ENCODE measurements at regions of chr3 and their contacts with region 1.

Region 1: DNA sequence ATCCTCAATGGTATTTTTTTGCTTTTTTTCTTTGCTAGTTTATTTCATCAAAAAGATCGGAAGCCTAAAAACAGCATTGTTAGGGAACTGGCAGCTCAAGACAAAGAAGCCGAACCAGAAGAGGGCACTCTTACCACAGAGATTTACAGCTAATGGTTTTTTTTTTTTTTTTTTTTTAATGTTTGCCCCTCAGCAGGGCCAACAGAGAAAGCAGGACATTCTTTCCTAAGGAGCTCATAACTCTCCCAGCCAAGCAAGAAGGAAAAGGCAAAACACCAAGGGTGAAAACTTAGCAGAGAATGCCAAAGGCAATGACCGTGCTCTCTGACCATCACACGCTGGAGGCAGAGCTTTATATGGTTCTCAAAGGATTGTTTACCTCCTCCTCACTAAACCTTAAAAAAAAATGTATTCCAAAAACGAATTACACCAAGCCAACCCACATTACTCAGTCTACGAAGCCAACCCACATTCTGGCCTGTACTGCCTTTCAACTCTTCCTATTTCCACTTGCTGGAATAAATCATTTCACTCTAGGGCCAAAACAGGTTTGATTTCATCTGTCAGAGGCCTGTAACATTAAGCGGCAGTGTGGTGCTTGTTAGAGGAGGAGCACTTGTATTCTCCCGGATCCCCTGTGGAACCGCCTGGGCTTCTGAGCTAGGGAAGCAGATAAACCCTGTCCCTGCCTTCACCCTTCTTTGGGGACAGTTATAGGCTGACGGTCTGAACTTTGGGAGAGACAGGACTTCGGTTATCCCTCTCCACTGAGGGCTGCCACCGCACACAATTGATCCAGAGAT is 35.6 kb upstream of the GYG1 start:
- DNase-seq: peak; percentile 95
- ATAC-seq: peak; percentile 76
- H3K4me3 ChIP-seq: no peak overlapping the region
- H3K27ac ChIP-seq: peak overlapping the region; percentile 74
- H3K4me1 ChIP-seq: peaks cover 13% of the 10 kb centered on the region
- H3K27me3 ChIP-seq: no peaks in the 10 kb centered on the region
- CTCF ChIP-seq: peak; percentile 86
- POLR2A ChIP-seq: no peak
- RAD21 ChIP-seq: peak; percentile 81

Region 2: GRCh38 chr3:148379763-148380382 is 575.9 kb before region 1 on chr3:
- CTCF ChIA-PET with region 1: interaction called, 5 read pairs
- POLR2A ChIA-PET with region 1: no interaction called
- dilution Hi-C with region 1: no loop called
- in situ Hi-C with region 1: no loop called
- intact Hi-C with region 1: loop called (anchors 2 kb)
- DNase-seq: peak; percentile 69
- ATAC-seq: peak; percentile 91
- H3K4me3 ChIP-seq: no peak overlapping the region
- H3K27ac ChIP-seq: no peak overlapping the region
- H3K4me1 ChIP-seq: no peaks in the 10 kb centered on the region
- H3K27me3 ChIP-seq: no peaks in the 10 kb centered on the region
- CTCF ChIP-seq: peak; percentile 63
- POLR2A ChIP-seq: no peak
- RAD21 ChIP-seq: peak; percentile 77

Region 3: GRCh38 chr3:149042789-149043386 is 87.1 kb after region 1 on chr3:
- CTCF ChIA-PET with region 1: no interaction called
- POLR2A ChIA-PET with region 1: no interaction called
- dilution Hi-C with region 1: no loop called
- in situ Hi-C with region 1: no loop called
- intact Hi-C with region 1: loop called (anchors 5 kb)
- DNase-seq: peak; percentile 72
- ATAC-seq: peak; percentile 46; the same call in 1 of the 2 replicates
- H3K4me3 ChIP-seq: no peak overlapping the region
- H3K27ac ChIP-seq: no peak overlapping the region
- H3K4me1 ChIP-seq: no peaks in the 10 kb centered on the region; the same call in 1 of the 2 replicates
- H3K27me3 ChIP-seq: no peaks in the 10 kb centered on the region
- CTCF ChIP-seq: no peak
- POLR2A ChIP-seq: no peak
- RAD21 ChIP-seq: no peak

Region 4: GRCh38 chr3:149273096-149273751 is 317.5 kb after region 1 on chr3:
- CTCF ChIA-PET with region 1: interaction called, 5 read pairs
- POLR2A ChIA-PET with region 1: no interaction called
- dilution Hi-C with region 1: no loop called
- in situ Hi-C with region 1: loop called (anchors 5 kb)
- intact Hi-C with region 1: loop called (anchors 1 kb)
- DNase-seq: peak; percentile 91
- ATAC-seq: peak; percentile 83
- H3K4me3 ChIP-seq: no peak overlapping the region
- H3K27ac ChIP-seq: no peak overlapping the region
- H3K4me1 ChIP-seq: peaks cover 2% of the 10 kb centered on the region; the same call in 1 of the 2 replicates
- H3K27me3 ChIP-seq: no peaks in the 10 kb centered on the region
- CTCF ChIP-seq: peak; percentile 100; the same call in 1 of the 2 replicates
- POLR2A ChIP-seq: peak; percentile 52; the same call in 1 of the 2 replicates
- RAD21 ChIP-seq: peak; percentile 98

Region 5: GRCh38 chr3:149393345-149394160 is 437.8 kb after region 1 on chr3:
- CTCF ChIA-PET with region 1: no interaction called
- POLR2A ChIA-PET with region 1: no interaction called
- dilution Hi-C with region 1: no loop called
- in situ Hi-C with region 1: no loop called
- intact Hi-C with region 1: loop called (anchors 5 kb)
- DNase-seq: peak; percentile 83
- ATAC-seq: peak; percentile 81
- H3K4me3 ChIP-seq: no peak overlapping the region
- H3K27ac ChIP-seq: no peak overlapping the region
- H3K4me1 ChIP-seq: peaks cover 16% of the 10 kb centered on the region
- H3K27me3 ChIP-seq: no peaks in the 10 kb centered on the region
- CTCF ChIP-seq: peak; percentile 97
- POLR2A ChIP-seq: no peak
- RAD21 ChIP-seq: peak; percentile 87

Region 6: DNA sequence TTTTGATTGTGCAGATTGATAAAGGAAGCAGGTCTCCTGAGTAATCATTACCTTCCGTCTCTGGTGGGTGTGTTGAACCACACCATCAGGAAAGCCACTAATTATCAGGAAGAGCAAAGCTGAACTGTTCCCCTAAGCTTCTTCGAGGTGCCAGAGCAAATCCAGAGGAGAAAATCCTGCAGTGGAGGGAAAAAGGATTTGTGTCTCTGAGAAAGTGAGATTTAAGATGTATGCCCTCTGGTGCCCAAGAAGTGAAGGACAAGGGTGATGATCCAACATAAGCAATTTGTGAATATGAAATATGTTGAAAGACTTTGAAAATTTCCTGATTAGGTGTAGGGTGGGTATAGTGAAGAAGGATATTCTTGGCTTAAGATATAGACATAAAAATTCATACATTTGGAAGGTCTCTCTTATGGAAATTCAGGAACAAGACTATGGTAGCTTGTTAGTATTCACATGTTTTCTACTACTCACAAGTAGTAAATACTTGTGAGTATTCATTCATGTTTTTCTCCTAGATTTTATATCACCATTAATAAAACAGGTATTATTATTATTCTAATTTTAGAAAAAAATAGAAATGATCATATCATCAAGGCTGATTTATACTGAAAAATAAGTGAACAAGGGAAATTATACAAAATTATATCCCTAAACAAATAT is 761.8 kb after region 1 on chr3:
- CTCF ChIA-PET with region 1: no interaction called
- POLR2A ChIA-PET with region 1: no interaction called
- dilution Hi-C with region 1: no loop called
- in situ Hi-C with region 1: loop called (anchors 25 kb)
- intact Hi-C with region 1: no loop called
- DNase-seq: peak; percentile 82
- ATAC-seq: peak; percentile 85
- H3K4me3 ChIP-seq: no peak overlapping the region
- H3K27ac ChIP-seq: no peak overlapping the region
- H3K4me1 ChIP-seq: no peaks in the 10 kb centered on the region
- H3K27me3 ChIP-seq: no peaks in the 10 kb centered on the region
- CTCF ChIP-seq: peak; percentile 78
- POLR2A ChIP-seq: no peak
- RAD21 ChIP-seq: peak; percentile 81

Measured in IMR-90 (cell line).